ENCODE measurements at regions of chr1 and their contacts with region 1.

Region 1: DNA sequence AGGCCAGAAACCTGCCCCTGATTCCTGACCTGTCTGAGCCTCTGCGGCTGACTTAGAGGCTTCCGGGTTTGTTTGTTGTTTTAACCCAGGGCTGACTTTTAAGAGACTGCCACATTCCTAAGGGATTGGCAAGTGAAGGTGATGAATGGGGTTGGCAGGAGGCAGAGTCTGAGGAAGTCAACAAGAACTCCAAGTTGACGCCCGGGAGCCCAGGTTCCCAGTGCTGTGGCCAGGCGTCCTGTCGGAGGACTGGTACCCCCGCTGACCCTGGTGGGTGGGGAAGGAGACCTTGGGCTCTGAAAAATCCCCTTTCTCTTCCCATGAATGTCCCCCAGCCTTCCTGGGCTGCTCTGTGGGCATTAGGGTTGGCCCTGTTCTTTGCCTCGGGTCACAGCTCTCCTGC is 19.7 kb upstream of the EPS8L3 start:
- DNase-seq: peak; percentile 33 to 82
- H3K4me3 ChIP-seq: no peak overlapping the region
- H3K27ac ChIP-seq: peak overlapping the region; percentile 68 to 79
- H3K4me1 ChIP-seq: peaks cover 7 to 39% of the 10 kb centered on the region in 2 donors
- H3K27me3 ChIP-seq: no peaks in the 10 kb centered on the region
- CTCF ChIP-seq: no peak

Region 2: GRCh38 chr1:109821831-109822745 is 38.7 kb after region 1 on chr1:
- intact Hi-C with region 1: loop called (anchors 2 kb)
- DNase-seq: peak; percentile 47 to 86
- H3K4me3 ChIP-seq: no peak overlapping the region
- H3K27ac ChIP-seq: peak overlapping the region; percentile 83 to 94
- H3K4me1 ChIP-seq: peaks cover 22 to 54% of the 10 kb centered on the region in 2 donors
- H3K27me3 ChIP-seq: no peaks in the 10 kb centered on the region
- CTCF ChIP-seq: no peak